ENCODE measurements at regions of chr4 and their contacts with region 1.

Region 1: DNA sequence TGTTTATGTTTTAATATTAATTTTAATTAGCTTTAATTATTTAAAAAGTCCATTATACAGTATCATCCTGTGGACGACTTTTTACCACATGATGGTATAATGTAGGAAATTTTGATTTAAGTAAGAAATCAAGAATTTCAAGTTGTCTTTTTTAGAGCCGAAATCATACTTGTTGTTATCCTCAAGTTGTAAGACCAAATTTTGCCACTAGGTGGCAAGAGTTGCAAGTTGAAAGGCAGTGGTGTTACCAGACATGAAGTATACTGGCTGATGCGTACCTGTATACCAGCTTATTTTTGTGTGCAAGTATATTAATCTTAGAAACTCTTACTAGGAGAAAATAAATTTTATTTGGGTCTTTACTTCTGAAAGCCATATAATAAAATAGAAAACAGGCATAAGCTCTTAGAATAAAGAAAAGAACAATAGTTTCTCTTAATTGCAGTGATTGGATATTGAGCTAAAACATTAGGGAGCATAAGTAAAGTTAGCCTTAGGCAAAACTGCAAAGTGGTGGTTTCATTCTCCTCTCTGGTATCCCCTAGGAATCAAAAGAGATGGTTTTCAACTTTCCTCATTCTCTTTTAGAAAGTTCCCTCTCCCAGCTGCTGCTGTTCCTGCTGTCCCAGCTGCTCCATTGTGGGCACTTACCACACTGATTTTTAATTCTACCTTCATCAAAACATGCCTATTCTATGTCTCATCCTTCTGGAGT is 118.0 kb upstream of the WDFY3 start:
- DNase-seq: peak; percentile 24
- H3K4me3 Mint-ChIP-seq: no peak overlapping the region
- H3K27ac Mint-ChIP-seq: no peak overlapping the region
- H3K4me1 Mint-ChIP-seq: no peaks in the 10 kb centered on the region
- H3K27me3 Mint-ChIP-seq: no peaks in the 10 kb centered on the region

Region 2: DNA sequence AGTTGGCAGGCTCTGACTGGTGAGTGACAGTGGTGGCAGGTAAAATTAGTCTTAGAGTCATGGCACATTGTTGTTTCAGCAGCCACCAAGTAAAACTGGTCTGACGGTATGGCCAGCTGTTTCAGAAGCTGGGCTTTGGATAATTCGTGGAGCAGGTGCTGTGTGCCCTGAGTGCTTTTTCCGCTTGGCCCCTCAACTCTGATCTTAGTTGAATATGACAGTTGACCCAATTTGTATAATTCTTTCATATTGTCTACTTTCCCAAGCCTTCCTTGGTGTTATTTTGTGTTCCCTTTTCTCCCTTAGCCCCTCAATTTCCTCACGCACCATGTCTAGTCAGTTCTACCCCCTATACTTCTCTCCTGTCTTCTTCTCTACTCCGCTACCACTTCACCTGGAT is 469.6 kb before region 1 on chr4:
- CTCF ChIA-PET with region 1: no interaction called
- intact Hi-C with region 1: no loop called
- DNase-seq: no peak
- H3K4me3 Mint-ChIP-seq: no peak overlapping the region
- H3K27ac Mint-ChIP-seq: no peak overlapping the region
- H3K4me1 Mint-ChIP-seq: no peaks in the 10 kb centered on the region
- H3K27me3 Mint-ChIP-seq: no peaks in the 10 kb centered on the region

Region 3: GRCh38 chr4:85106166-85106565 is 21.6 kb after region 1 on chr4:
- CTCF ChIA-PET with region 1: no interaction called
- intact Hi-C with region 1: no loop called
- DNase-seq: no peak
- H3K4me3 Mint-ChIP-seq: no peak overlapping the region
- H3K27ac Mint-ChIP-seq: no peak overlapping the region
- H3K4me1 Mint-ChIP-seq: no peaks in the 10 kb centered on the region
- H3K27me3 Mint-ChIP-seq: no peaks in the 10 kb centered on the region

Region 4: DNA sequence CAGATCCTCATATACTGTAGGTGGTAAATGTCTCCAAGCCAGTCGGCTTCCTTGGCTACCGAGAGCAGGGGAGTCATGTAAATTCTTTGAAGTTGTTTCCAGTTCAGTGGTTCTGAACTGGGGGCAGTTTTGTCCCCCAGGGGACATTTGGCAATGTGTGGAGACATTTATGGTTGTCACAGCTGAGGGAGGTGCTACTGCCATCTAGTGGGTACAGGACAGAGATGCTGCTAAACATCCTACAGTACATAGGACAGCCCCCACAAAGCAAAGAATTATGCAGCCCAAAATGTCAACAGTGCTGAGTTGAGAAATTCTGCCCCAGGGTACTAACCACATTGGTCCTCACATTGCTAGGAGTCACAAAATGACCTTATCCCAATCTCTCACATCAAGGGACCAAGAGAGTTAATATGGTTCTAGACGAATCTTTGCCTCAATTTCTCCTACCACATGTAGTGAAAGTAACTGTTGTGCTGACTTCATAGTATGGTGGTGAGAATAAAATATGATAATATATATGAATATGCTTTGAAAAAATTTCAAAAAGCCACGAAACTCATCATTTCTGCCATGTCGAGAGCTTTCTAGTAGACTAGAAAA is 286.0 kb after region 1 on chr4:
- CTCF ChIA-PET with region 1: no interaction called
- intact Hi-C with region 1: loop called (anchors 1 kb)
- DNase-seq: peak; percentile 12
- H3K4me3 Mint-ChIP-seq: no peak overlapping the region
- H3K27ac Mint-ChIP-seq: no peak overlapping the region
- H3K4me1 Mint-ChIP-seq: no peaks in the 10 kb centered on the region
- H3K27me3 Mint-ChIP-seq: no peaks in the 10 kb centered on the region

Region 5: GRCh38 chr4:85747882-85748491 is 663.5 kb after region 1 on chr4:
- CTCF ChIA-PET with region 1: interaction called, 3 read pairs
- intact Hi-C with region 1: loop called (anchors 2 kb)
- DNase-seq: peak; percentile 25
- H3K4me3 Mint-ChIP-seq: no peak overlapping the region
- H3K27ac Mint-ChIP-seq: no peak overlapping the region
- H3K4me1 Mint-ChIP-seq: no peaks in the 10 kb centered on the region
- H3K27me3 Mint-ChIP-seq: peaks cover 3% of the 10 kb centered on the region